ENCODE measurements at regions of chr11 and their contacts with region 1.

Region 1: DNA sequence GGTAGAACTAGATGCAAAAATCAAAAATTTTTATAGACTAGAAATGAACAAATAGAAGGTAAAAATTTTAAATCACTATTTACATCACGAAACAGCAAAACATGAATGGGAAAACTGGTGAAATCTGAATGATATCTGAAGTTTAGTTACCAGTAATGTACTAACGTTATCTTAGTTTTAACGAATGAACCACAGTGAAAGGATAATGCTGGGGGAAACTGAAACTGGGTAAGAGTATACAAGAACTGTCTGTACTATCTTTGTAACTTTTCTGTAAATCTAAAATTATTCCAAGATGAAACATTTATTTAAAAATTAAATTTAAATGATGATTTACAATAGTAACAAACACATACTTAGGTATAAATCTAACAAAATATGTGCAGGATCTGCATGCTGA is 7.4 kb downstream of the GDPD4 start:
- DNase-seq: no peak
- H3K4me3 ChIP-seq: no peak overlapping the region
- H3K4me3 Mint-ChIP-seq: no peak overlapping the region
- H3K27ac Mint-ChIP-seq: no peak overlapping the region
- H3K4me1 ChIP-seq: no peaks in the 10 kb centered on the region
- H3K4me1 Mint-ChIP-seq: no peaks in the 10 kb centered on the region
- H3K27me3 ChIP-seq: no peaks in the 10 kb centered on the region
- H3K27me3 Mint-ChIP-seq: peaks cover 6% of the 10 kb centered on the region
- CTCF ChIP-seq: no peak

Region 2: DNA sequence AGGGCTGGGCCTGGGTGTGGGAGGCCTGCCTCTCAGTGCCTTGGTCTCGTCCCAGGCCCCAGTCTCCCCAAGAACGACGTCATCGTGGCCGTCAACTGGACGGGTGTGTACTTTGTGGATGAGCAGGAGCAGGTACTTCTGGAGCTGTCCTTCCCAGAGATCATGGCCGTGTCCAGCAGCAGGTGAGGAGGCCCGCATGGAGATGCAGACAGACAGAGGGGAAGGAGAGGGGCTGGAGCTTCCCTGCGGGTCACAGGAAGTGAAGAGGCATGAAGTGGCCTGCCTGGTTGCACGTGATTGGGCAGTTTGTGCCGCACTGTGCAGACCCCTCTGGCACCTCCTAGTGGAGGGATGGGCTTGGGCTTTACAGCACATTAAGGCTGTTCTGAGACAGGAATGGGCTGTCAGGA is 95.6 kb before region 1 on chr11:
- CTCF ChIA-PET with region 1: no interaction called
- POLR2A ChIA-PET with region 1: interaction called, 3 read pairs
- intact Hi-C with region 1: loop called (anchors 5 kb)
- DNase-seq: peak; percentile 68 to 70
- H3K4me3 ChIP-seq: no peak overlapping the region
- H3K4me3 Mint-ChIP-seq: no peak overlapping the region
- H3K27ac Mint-ChIP-seq: no peak overlapping the region
- H3K4me1 ChIP-seq: no peaks in the 10 kb centered on the region
- H3K4me1 Mint-ChIP-seq: no peaks in the 10 kb centered on the region
- H3K27me3 ChIP-seq: no peaks in the 10 kb centered on the region
- H3K27me3 Mint-ChIP-seq: no peaks in the 10 kb centered on the region
- CTCF ChIP-seq: peak; percentile 53 to 72